ENCODE measurements at regions of chr11 and their contacts with region 1.

Region 1: DNA sequence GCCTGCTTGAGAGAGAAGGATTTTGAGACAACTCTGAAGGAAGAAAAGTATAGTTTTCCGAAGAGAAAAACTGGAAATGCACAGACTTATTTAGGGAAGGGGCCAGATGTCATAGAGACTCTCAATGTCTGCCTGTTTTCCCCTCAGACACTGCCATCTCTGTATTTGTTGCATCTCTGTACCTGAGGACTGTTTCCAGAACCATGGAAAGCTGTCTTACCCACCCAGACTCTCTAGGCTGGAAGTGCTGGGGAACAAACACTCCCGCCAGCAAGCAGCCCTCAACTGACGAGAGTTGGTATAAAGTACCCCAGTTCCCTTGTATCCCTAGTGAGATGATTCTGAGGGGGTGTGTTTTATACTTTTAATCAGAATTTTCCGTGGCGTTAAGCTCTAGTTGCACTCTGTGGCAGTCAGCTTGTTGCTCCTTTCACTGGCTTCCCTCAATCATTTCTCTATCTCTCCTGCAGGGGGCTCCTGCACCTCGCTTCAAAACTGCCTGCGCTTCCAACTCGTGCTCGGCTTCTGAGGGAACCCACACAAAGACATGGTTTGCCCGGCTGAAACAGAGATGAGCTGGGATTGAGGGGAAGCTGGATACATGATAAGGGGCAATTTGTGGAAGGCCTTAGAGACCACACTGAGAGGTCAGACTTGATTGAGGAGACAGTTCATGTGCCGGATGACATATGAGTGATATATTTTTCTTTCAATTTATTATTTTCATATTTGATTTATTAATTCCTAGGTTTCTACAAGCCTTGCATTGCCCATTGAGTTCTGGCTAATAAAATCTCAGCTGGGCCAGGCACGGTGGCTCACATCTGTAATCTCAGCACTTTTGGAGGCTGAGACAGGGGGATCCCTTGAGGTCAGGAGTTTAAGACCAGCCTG is 36.9 kb upstream of the CLPB start:
- DNase-seq: peak; percentile 68
- ATAC-seq: peak; percentile 96
- H3K4me3 Mint-ChIP-seq: peak overlapping the region; percentile 15
- H3K27ac Mint-ChIP-seq: no peak overlapping the region
- H3K4me1 Mint-ChIP-seq: peaks cover 2% of the 10 kb centered on the region
- H3K27me3 Mint-ChIP-seq: peaks cover 19% of the 10 kb centered on the region
- CTCF ChIP-seq: peak; percentile 66

Region 2: GRCh38 chr11:72430741-72431570 is 40.3 kb before region 1 on chr11:
- CTCF ChIA-PET with region 1: interaction called, 16 read pairs
- POLR2A ChIA-PET with region 1: no interaction called
- intact Hi-C with region 1: no loop called
- DNase-seq: peak; percentile 60
- ATAC-seq: peak; percentile 19
- H3K4me3 Mint-ChIP-seq: no peak overlapping the region
- H3K27ac Mint-ChIP-seq: no peak overlapping the region
- H3K4me1 Mint-ChIP-seq: peaks cover 31% of the 10 kb centered on the region
- H3K27me3 Mint-ChIP-seq: no peaks in the 10 kb centered on the region
- CTCF ChIP-seq: peak; percentile 77

Region 3: DNA sequence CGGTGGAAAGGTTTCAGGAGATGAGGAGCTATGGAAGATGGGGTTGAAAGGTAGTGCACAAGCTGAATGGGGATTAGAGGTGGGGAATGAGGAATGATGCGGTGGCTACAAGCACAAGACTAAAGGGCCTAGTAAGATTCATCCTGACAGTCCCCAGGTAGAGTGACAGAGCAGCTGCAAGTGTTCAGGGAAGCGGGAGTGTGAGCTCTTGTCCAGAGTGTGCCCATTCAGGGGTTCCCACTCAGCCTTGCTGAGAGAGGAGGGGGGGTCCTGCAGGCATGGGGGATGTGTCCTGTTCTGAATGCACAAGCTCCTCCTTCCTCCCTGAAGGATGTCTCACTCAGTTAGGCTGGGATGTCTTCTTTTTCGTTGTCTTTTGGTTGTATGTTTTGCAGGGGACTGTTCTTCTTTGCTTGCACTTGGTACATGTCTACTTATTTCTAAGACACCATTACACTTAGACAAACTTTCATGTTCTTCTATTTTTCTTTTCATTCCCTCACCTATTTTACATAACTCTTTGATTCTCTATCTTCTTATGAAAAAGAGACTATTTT is 11.1 kb before region 1 on chr11:
- CTCF ChIA-PET with region 1: interaction called, 39 read pairs
- POLR2A ChIA-PET with region 1: no interaction called
- intact Hi-C with region 1: no loop called
- DNase-seq: no peak
- ATAC-seq: no peak
- H3K4me3 Mint-ChIP-seq: no peak overlapping the region
- H3K27ac Mint-ChIP-seq: no peak overlapping the region
- H3K4me1 Mint-ChIP-seq: no peaks in the 10 kb centered on the region
- H3K27me3 Mint-ChIP-seq: peaks cover 10% of the 10 kb centered on the region
- CTCF ChIP-seq: no peak

Region 4: DNA sequence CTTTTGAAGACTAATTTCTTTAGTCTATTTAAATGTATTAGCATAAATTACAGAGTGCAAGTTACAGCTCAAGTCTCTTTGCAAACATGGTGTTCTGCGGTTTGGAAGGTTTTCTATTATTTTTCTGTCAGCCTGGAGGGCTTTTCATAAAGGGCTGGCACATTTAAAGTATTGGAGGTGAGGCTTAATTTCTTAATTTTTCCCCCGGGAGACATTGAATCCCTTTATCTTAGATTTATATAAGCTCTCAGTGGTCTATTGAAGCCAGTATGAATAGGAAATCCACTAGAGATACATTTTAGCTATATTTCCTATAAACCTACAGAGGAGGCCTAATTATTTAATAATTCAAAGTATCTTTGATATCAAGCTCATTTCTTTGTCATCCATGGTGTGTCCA is 65.8 kb after region 1 on chr11:
- CTCF ChIA-PET with region 1: interaction called, 10 read pairs
- POLR2A ChIA-PET with region 1: no interaction called
- intact Hi-C with region 1: no loop called
- DNase-seq: no peak
- ATAC-seq: no peak
- H3K4me3 Mint-ChIP-seq: no peak overlapping the region
- H3K27ac Mint-ChIP-seq: no peak overlapping the region
- H3K4me1 Mint-ChIP-seq: no peaks in the 10 kb centered on the region
- H3K27me3 Mint-ChIP-seq: peaks cover 14% of the 10 kb centered on the region
- CTCF ChIP-seq: no peak

Region 5: GRCh38 chr11:72573072-72573854 is 102.0 kb after region 1 on chr11:
- CTCF ChIA-PET with region 1: interaction called, 18 read pairs
- POLR2A ChIA-PET with region 1: interaction called, 3 read pairs
- intact Hi-C with region 1: no loop called
- DNase-seq: peak; percentile 50
- ATAC-seq: peak; percentile 93
- H3K4me3 Mint-ChIP-seq: no peak overlapping the region
- H3K27ac Mint-ChIP-seq: no peak overlapping the region
- H3K4me1 Mint-ChIP-seq: peaks cover 4% of the 10 kb centered on the region
- H3K27me3 Mint-ChIP-seq: peaks cover 12% of the 10 kb centered on the region
- CTCF ChIP-seq: peak; percentile 64

Region 6: GRCh38 chr11:72642884-72643511 is 171.7 kb after region 1 on chr11:
- CTCF ChIA-PET with region 1: interaction called, 17 read pairs
- POLR2A ChIA-PET with region 1: no interaction called
- intact Hi-C with region 1: no loop called
- DNase-seq: peak; percentile 70
- ATAC-seq: peak; percentile 90
- H3K4me3 Mint-ChIP-seq: peak overlapping the region; percentile 57
- H3K27ac Mint-ChIP-seq: no peak overlapping the region
- H3K4me1 Mint-ChIP-seq: no peaks in the 10 kb centered on the region
- H3K27me3 Mint-ChIP-seq: no peaks in the 10 kb centered on the region
- CTCF ChIP-seq: peak; percentile 100

Measured in activated CD8-positive, alpha-beta T cell treated with anti-CD3 and anti-CD28 coated beads for 36 hours (primary cell).